ENCODE measurements at regions of chr6 and their contacts with region 1.

Region 1: GRCh38 chr6:30611150-30611855 is 5.7 kb downstream of the PPP1R10 start:
- DNase-seq: no peak
- ATAC-seq: no peak
- H3K4me3 Mint-ChIP-seq: no peak overlapping the region
- H3K27ac Mint-ChIP-seq: peak overlapping the region; percentile 39
- H3K4me1 Mint-ChIP-seq: peaks cover 59% of the 10 kb centered on the region
- H3K27me3 Mint-ChIP-seq: no peaks in the 10 kb centered on the region

Region 2: GRCh38 chr6:30590994-30591393 is 20.3 kb before region 1 on chr6:
- CTCF ChIA-PET with region 1: interaction called, 20 read pairs
- POLR2A ChIA-PET with region 1: interaction called, 13 read pairs
- intact Hi-C with region 1: loop called in 1 of 2 experiments (anchors 2 kb)
- DNase-seq: no peak
- ATAC-seq: no peak
- H3K4me3 Mint-ChIP-seq: no peak overlapping the region
- H3K27ac Mint-ChIP-seq: peak overlapping the region; percentile 59
- H3K4me1 Mint-ChIP-seq: no peaks in the 10 kb centered on the region
- H3K27me3 Mint-ChIP-seq: no peaks in the 10 kb centered on the region